Aorta (tissue), 5 donors: ENCODE measurements at regions of chr16 and their contacts with region 1.

Region 1: GRCh38 chr16:30585400-30586189 is at the start of gene ZNF785:
- DNase-seq: peak; percentile 96 to 98
- ATAC-seq: peak; percentile 99
- H3K4me3 ChIP-seq: peak within 1 kb of the TSS; percentile 49 to 57
- H3K27ac ChIP-seq: peak within 1 kb of the TSS in 1 of 2 donors; percentile 83
- H3K4me1 ChIP-seq: peaks cover 0 to 3% of the 10 kb centered on the region in 2 donors
- H3K27me3 ChIP-seq: no peaks in the 10 kb centered on the region
- total RNA-seq, gene ZNF785: 8.5 to 21.8 TPM

Region 2: DNA sequence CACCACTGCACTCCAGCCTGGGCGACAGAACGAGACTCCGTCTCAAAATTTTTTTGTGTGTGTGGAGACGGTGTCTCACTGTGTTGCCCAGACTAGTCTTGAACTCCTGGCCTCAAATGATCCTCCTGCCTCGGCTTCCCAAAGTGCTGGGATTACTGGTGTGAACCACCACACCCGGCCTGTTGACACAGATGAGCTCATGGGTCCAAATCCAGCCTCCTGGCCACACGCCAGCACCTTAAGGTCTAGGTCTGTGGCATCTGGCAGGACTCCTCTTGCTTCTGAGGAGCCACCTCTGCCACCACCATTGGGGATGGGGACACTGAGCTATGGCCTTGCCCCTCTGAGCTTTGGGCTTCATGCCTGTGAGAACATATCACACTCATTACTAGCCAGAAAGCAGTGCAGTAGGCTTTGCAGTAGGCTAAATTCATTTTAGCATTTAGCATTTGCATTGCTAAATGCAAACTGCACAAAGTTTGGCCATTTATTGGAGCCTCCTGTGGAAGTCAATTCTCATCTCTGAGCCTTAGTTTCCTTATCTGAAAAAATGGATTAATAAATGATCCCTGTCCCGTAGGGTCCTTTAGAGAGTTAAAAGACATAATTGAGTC is 717.1 kb before region 1 on chr16:
- intact Hi-C with region 1: no loop called
- DNase-seq: no peak
- ATAC-seq: no peak
- H3K4me3 ChIP-seq: no peak overlapping the region
- H3K27ac ChIP-seq: no peak overlapping the region
- H3K4me1 ChIP-seq: no peaks in the 10 kb centered on the region
- H3K27me3 ChIP-seq: no peaks in the 10 kb centered on the region

Region 3: GRCh38 chr16:30523768-30524574 is 61.6 kb before region 1 on chr16:
- intact Hi-C with region 1: no loop called
- DNase-seq: no peak
- ATAC-seq: no peak
- H3K4me3 ChIP-seq: no peak overlapping the region
- H3K27ac ChIP-seq: no peak overlapping the region
- H3K4me1 ChIP-seq: no peaks in the 10 kb centered on the region
- H3K27me3 ChIP-seq: no peaks in the 10 kb centered on the region

Region 4: GRCh38 chr16:30534368-30535105 is 51.1 kb before region 1 on chr16 and contains the start of gene ZNF747:
- intact Hi-C with region 1: loop called in 1 of 2 experiments (anchors 10 kb)
- DNase-seq: peak; percentile 94 to 97
- ATAC-seq: peak; percentile 95
- H3K4me3 ChIP-seq: peak within 1 kb of the TSS; percentile 40 to 80
- H3K27ac ChIP-seq: peak within 1 kb of the TSS in 1 of 2 donors; percentile 84
- H3K4me1 ChIP-seq: no peaks in the 10 kb centered on the region
- H3K27me3 ChIP-seq: no peaks in the 10 kb centered on the region
- total RNA-seq, gene ZNF747: 9.1 to 9.5 TPM

Region 5: DNA sequence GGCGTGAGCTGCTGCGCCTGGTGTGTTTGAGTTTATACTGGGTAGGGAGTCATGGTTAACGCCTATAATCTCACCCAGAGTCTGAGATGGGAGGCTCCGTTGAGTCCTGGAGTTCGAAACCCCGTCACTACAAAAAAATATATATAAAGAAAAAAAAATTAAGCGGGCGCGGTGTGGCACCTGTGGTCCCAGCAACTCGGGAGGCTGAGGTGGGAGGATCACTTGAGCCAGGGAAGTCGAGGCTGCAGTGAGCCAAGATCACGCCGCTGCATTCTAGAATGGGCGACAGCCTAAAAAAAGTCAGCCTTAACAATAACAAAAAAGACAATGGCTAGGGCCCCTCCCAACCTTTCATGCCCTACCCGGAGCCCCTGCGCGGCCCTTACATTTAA is 47.9 kb after region 1 on chr16:
- intact Hi-C with region 1: loop called (anchors 5 kb)
- DNase-seq: no peak
- ATAC-seq: no peak
- H3K4me3 ChIP-seq: no peak overlapping the region
- H3K27ac ChIP-seq: peak overlapping the region in 1 of 2 donors; percentile 1
- H3K4me1 ChIP-seq: no peaks in the 10 kb centered on the region
- H3K27me3 ChIP-seq: no peaks in the 10 kb centered on the region